ENCODE measurements at regions of chr20 and their contacts with region 1.

Region 1: GRCh38 chr20:33460711-33461110 is 17.1 kb upstream of the SNTA1 start:
- DNase-seq: no peak
- H3K4me3 Mint-ChIP-seq: no peak overlapping the region
- H3K27ac Mint-ChIP-seq: no peak overlapping the region
- H3K4me1 Mint-ChIP-seq: peaks cover 3% of the 10 kb centered on the region
- H3K27me3 Mint-ChIP-seq: no peaks in the 10 kb centered on the region

Region 2: GRCh38 chr20:33370296-33370695 is 90.4 kb before region 1 on chr20:
- intact Hi-C with region 1: no loop called
- DNase-seq: peak; percentile 79
- H3K4me3 Mint-ChIP-seq: peak overlapping the region; percentile 15
- H3K27ac Mint-ChIP-seq: peak overlapping the region; percentile 69
- H3K4me1 Mint-ChIP-seq: peaks cover 26% of the 10 kb centered on the region
- H3K27me3 Mint-ChIP-seq: no peaks in the 10 kb centered on the region

Region 3: DNA sequence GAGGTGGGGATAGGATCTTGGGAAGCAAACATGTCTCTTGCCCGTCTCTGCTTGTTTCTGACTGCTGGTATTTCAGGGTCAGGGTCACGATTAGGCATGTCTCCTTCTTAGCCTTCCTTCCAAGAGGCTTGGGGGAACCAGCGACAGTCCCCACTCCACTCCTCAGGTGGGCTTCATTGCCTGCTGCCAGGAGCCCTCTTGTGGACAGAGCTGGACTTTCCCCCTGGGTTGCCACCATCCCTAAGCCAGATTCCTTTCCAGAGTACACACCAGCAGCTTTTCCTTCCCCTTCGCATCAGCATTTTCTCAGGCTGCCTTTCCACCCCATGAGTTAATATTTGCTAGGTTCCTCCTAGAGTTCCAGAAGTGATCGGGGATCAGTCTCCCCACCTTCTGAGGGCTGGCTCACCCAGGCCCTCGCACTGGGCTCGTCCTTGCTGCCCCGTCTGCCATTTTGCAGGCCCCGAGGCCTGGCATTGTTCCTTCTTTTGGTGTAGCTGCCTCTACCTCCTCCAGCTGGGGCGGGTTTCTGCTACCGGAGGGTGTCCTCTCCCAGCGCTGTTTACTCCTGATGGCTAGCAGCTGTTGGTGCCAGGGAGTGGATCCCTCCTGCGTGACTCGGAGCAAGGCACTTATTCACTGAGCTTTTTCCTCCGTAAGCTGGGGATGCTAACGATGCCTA is 192.6 kb after region 1 on chr20:
- intact Hi-C with region 1: loop called (anchors 1 kb)
- DNase-seq: peak; percentile 79
- H3K4me3 Mint-ChIP-seq: no peak overlapping the region
- H3K27ac Mint-ChIP-seq: peak overlapping the region; percentile 45
- H3K4me1 Mint-ChIP-seq: peaks cover 16% of the 10 kb centered on the region
- H3K27me3 Mint-ChIP-seq: no peaks in the 10 kb centered on the region